Endothelial cell of umbilical vein (primary cell): ENCODE measurements at regions of chr3 and their contacts with region 1.

Region 1: GRCh38 chr3:178325330-178325729 is 210.9 kb upstream of the KCNMB2 start:
- DNase-seq: peak; percentile 76
- H3K4me3 ChIP-seq: no peak overlapping the region
- H3K27ac ChIP-seq: peak overlapping the region; percentile 2
- H3K4me1 ChIP-seq: peaks cover 13% of the 10 kb centered on the region
- H3K27me3 ChIP-seq: no peaks in the 10 kb centered on the region
- CTCF ChIP-seq: peak in 1 of 2 donors; percentile 15
- POLR2A ChIP-seq: no peak

Region 2: GRCh38 chr3:177050501-177051237 is 1274.7 kb before region 1 on chr3:
- CTCF ChIA-PET with region 1: interaction called, 11 read pairs
- POLR2A ChIA-PET with region 1: no interaction called
- dilution Hi-C with region 1: no loop called
- intact Hi-C with region 1: loop called (anchors 1 kb)
- DNase-seq: peak; percentile 71
- H3K4me3 ChIP-seq: no peak overlapping the region
- H3K27ac ChIP-seq: no peak overlapping the region
- H3K4me1 ChIP-seq: no peaks in the 10 kb centered on the region
- H3K27me3 ChIP-seq: no peaks in the 10 kb centered on the region
- CTCF ChIP-seq: no peak
- POLR2A ChIP-seq: no peak

Region 3: GRCh38 chr3:177679568-177680441 is 645.5 kb before region 1 on chr3:
- CTCF ChIA-PET with region 1: no interaction called
- POLR2A ChIA-PET with region 1: no interaction called
- dilution Hi-C with region 1: no loop called
- intact Hi-C with region 1: loop called (anchors 1 kb)
- DNase-seq: peak; percentile 76
- H3K4me3 ChIP-seq: no peak overlapping the region
- H3K27ac ChIP-seq: peak overlapping the region; percentile 72
- H3K4me1 ChIP-seq: peaks cover 45% of the 10 kb centered on the region
- H3K27me3 ChIP-seq: no peaks in the 10 kb centered on the region
- CTCF ChIP-seq: no peak
- POLR2A ChIP-seq: no peak

Region 4: DNA sequence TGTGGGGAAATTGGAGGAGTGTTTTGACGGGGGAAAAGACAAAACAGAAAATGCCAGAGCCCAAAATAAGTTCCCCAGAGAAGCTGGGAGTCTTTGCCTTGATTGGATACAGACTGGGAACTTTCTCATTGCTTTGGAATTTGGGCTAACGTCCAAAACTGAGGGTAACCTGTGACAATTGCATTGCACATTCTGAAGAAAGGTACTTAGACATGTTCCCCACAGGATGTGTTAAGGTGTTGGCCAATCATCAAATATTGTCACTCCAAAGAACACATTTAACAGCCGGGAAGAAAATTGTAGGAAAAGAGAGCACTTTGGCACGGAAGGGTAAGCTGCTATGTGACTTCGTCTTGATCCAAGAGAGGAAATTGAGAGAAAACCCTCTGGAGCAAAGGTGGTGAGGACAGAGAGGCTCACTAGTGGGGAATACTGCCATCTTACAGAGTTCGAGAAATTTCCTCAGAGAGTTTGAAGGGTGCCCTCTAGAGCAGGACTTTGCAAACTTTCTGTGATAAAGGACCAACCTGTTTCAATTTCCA is 508.6 kb before region 1 on chr3:
- CTCF ChIA-PET with region 1: no interaction called
- POLR2A ChIA-PET with region 1: no interaction called
- dilution Hi-C with region 1: no loop called
- intact Hi-C with region 1: loop called (anchors 10 kb)
- DNase-seq: peak; percentile 62
- H3K4me3 ChIP-seq: no peak overlapping the region
- H3K27ac ChIP-seq: no peak overlapping the region
- H3K4me1 ChIP-seq: peaks cover 18% of the 10 kb centered on the region
- H3K27me3 ChIP-seq: no peaks in the 10 kb centered on the region
- CTCF ChIP-seq: no peak
- POLR2A ChIP-seq: no peak

Region 5: GRCh38 chr3:178084938-178085816 is 240.2 kb before region 1 on chr3:
- CTCF ChIA-PET with region 1: interaction called, 7 read pairs
- POLR2A ChIA-PET with region 1: no interaction called
- dilution Hi-C with region 1: no loop called
- intact Hi-C with region 1: loop called (anchors 2 kb)
- DNase-seq: peak; percentile 86
- H3K4me3 ChIP-seq: no peak overlapping the region
- H3K27ac ChIP-seq: peak overlapping the region; percentile 8
- H3K4me1 ChIP-seq: peaks cover 24% of the 10 kb centered on the region
- H3K27me3 ChIP-seq: no peaks in the 10 kb centered on the region
- CTCF ChIP-seq: no peak
- POLR2A ChIP-seq: no peak

Region 6: DNA sequence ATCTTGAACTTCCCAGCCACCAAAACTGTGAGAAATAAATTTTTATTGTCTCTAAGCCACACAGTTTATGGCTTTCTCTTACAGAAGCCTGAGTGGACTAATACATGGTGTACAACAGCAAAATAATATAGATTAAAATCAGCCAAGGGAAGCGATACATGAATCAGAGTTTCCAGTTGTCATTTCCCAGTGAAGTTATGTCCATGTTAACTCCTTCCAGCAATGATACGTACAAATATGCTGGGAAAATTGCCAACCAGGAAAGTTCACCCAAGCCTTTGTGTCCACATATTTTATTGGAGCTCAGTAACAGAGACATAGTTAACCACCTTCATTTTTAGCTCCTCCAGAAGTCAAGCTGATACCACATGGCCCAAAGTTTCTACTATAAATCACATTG is 70.0 kb before region 1 on chr3:
- CTCF ChIA-PET with region 1: interaction called, 3 read pairs
- POLR2A ChIA-PET with region 1: no interaction called
- dilution Hi-C with region 1: no loop called
- intact Hi-C with region 1: loop called (anchors 2 kb)
- DNase-seq: peak; percentile 98
- H3K4me3 ChIP-seq: no peak overlapping the region
- H3K27ac ChIP-seq: peak overlapping the region; percentile 62
- H3K4me1 ChIP-seq: peaks cover 15% of the 10 kb centered on the region
- H3K27me3 ChIP-seq: no peaks in the 10 kb centered on the region
- CTCF ChIP-seq: no peak
- POLR2A ChIP-seq: peak; percentile 49